ENCODE measurements at regions of chr4 and their contacts with region 1.

Region 1: DNA sequence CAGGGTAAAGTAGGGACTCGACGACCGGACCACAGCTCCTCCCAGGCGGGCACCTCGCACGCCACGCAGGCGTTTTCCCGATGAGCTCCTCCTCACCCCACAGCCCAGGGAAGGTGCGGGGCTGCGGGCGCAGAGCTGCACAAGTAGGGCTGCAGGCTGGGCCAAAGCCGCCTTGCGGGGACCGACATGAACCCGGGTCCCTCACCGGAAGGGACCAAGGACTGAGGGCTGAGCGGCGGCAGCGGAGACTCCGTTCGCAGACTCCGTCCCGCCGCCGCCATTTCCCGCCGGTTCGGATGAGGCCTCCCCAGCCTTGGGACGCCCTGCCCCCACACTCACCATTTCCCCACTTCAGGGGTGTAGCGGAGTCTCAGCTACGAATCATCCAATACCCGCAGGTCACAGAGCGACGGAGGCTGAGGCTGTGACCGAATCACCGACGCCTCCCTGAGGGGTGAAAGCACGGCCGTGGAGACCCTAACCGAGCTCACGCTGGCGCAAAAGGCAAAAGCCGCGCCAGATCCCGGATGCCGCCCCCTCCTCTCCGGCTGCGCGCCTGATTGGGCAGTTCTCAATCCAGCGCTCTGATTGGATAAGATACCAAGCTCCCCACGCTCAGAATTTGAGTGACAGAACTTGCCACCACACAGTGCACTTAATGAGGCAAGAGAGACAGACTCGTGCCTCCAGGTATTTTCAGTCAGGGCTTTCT is at the start of gene ZNF732:
- DNase-seq: peak in 1 of 2 experiments; percentile 89
- H3K4me3 ChIP-seq: peak within 1 kb of the TSS; percentile 87 to 99 (median 97)
- H3K27ac ChIP-seq: peak within 1 kb of the TSS; percentile 91
- H3K4me1 ChIP-seq: peaks cover 0 to 6% (median 3%) of the 10 kb centered on the region in 4 experiments; a peak in 4 of 7 replicates
- H3K27me3 ChIP-seq: no peaks in the 10 kb centered on the region
- CTCF ChIP-seq: no peak
- EP300 ChIP-seq: no peak
- POLR2A ChIP-seq: peak in 1 of 2 experiments; percentile 94; a peak in 2 of 3 replicates
- RAD21 ChIP-seq: no peak
- total RNA-seq, gene ZNF732: 33.3 and 35.7 TPM in 2 replicates

Region 2: DNA sequence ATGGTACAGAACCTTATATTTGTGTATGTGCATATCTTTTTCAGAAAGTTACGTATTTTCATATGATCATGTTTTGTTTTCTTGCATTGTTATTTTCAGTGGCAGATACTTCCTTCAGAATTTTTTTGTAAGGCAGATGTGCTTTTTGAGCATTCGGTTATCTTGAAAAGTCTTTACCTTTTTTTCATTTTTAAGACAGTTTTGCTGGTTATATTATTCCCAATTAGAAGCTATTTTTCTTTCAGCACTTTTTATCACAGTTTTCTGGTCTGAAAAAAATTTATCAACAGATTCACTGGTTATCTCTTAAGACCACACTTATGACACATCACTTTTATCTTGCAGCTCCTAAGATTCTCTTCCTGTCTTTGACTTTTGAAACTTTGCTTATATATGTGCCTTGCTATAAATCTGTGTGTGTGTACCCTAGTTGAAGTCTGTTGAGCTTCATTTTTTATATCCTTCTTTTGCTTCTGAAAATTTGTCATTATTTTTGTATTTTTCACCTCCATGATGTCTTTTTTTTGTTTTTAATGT is 53.0 kb before region 1 on chr4:
- CTCF ChIA-PET with region 1: no interaction called
- POLR2A ChIA-PET with region 1: no interaction called
- DNase-seq: no peak
- H3K4me3 ChIP-seq: no peak overlapping the region
- H3K27ac ChIP-seq: no peak overlapping the region
- H3K4me1 ChIP-seq: no peaks in the 10 kb centered on the region
- H3K27me3 ChIP-seq: no peaks in the 10 kb centered on the region
- CTCF ChIP-seq: no peak
- EP300 ChIP-seq: no peak
- POLR2A ChIP-seq: no peak
- RAD21 ChIP-seq: no peak

Region 3: GRCh38 chr4:288891-289290 is 16.2 kb before region 1 on chr4:
- CTCF ChIA-PET with region 1: interaction called, 3 read pairs
- POLR2A ChIA-PET with region 1: interaction called, 26 read pairs
- DNase-seq: no peak
- H3K4me3 ChIP-seq: no peak overlapping the region
- H3K27ac ChIP-seq: no peak overlapping the region
- H3K4me1 ChIP-seq: no peaks in the 10 kb centered on the region
- H3K27me3 ChIP-seq: no peaks in the 10 kb centered on the region
- CTCF ChIP-seq: no peak
- EP300 ChIP-seq: no peak
- POLR2A ChIP-seq: no peak
- RAD21 ChIP-seq: no peak

Region 4: GRCh38 chr4:294732-295131 is 10.4 kb before region 1 on chr4:
- CTCF ChIA-PET with region 1: interaction called, 7 read pairs
- POLR2A ChIA-PET with region 1: interaction called, 26 read pairs
- DNase-seq: no peak
- H3K4me3 ChIP-seq: no peak overlapping the region
- H3K27ac ChIP-seq: no peak overlapping the region
- H3K4me1 ChIP-seq: peaks cover 0 to 3% (median 1%) of the 10 kb centered on the region in 4 experiments; a peak in 2 of 7 replicates
- H3K27me3 ChIP-seq: no peaks in the 10 kb centered on the region
- CTCF ChIP-seq: no peak
- EP300 ChIP-seq: no peak
- POLR2A ChIP-seq: no peak
- RAD21 ChIP-seq: no peak

Region 5: DNA sequence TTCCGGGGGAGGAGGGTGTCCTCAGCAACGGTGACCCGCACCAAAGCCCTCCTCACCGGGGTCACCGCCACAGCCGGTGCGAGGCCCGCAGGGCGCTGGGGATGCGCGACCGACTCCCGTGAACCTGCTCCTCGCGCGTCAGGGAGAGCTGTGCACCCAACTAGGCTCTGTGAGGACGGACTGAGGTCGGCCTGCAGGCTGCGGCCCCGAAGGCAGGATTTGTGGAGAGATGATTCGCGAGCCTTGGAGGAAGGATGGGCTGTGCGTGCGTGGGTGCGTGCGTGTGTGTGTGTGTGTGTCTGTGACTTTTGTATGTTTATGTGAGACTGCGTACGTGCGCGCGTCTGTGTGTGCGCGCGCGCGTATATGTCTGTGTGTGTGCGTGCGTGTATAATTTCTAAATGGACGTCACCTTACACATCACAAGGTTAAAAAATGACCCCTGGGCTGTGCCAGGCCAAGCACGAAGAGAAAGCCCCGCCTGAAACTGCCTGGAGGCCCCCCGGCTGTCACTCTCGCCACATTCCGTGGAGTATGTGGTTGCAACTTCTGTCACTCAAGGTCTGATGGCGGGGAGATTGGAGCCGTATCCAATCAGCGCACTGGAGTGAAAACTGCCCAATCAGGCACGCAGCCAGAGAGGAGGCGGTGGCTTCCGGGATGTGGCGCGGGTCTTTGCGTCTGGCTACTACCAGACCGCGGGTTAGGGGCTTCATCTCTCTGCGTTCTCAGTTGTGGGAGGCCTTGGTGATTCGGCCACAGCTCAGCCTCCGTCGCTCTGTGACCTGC is 32.2 kb after region 1 on chr4 and contains the start of gene ZNF141:
- CTCF ChIA-PET with region 1: interaction called, 4 read pairs
- POLR2A ChIA-PET with region 1: interaction called, 18 read pairs
- DNase-seq: peak; percentile 86
- H3K4me3 ChIP-seq: peak within 1 kb of the TSS; percentile 85 to 99 (median 92)
- H3K27ac ChIP-seq: peak within 1 kb of the TSS; percentile 88
- H3K4me1 ChIP-seq: peaks cover 2 to 11% (median 4%) of the 10 kb centered on the region in 4 experiments; a peak in 6 of 7 replicates
- H3K27me3 ChIP-seq: peaks cover 0 to 11% (median 6%) of the 10 kb centered on the region in 4 experiments; a peak in 5 of 7 replicates
- CTCF ChIP-seq: no peak
- EP300 ChIP-seq: no peak
- POLR2A ChIP-seq: peak; percentile 77 to 96
- RAD21 ChIP-seq: no peak
- total RNA-seq, gene ZNF141: 45.9 and 50.8 TPM in 2 replicates